ENCODE measurements at regions of chr2 and their contacts with region 1.

Region 1: DNA sequence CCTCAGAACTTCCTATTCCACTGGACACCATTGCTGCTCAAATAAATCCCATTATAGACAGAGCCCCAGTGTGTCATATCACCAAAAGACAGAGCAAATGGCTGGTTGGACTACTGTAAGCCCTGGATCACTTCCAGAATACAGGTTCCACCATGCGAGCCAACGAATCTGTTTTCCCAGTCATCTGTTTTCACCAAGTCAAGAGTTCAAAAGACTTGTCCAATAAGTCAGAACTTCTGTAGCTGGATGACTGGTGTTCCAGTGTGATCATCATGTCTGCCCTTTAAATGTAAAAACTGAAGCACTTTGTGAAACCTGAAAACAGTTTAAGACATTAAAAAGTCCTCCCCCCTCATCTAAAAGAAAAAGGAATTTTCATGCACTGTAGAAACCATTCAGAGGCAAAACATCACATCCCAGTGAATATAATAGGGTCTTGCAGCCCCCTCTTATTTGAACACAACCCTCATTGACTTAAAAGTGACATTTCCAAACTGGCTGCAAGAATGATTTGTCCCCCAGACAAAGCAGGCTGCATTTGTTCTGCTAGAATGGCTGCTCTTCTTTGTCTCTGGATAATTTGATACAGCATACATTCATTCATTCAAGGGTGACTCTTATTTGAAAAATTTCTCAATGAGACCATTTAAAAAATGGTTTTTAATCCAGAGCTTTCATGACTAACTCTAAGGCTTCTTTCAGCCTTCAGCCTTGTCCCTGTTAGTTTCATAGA is 64.6 kb upstream of the TANC1 start:
- DNase-seq: no peak
- H3K4me3 Mint-ChIP-seq: no peak overlapping the region
- H3K27ac Mint-ChIP-seq: no peak overlapping the region
- H3K4me1 Mint-ChIP-seq: no peaks in the 10 kb centered on the region
- H3K27me3 Mint-ChIP-seq: no peaks in the 10 kb centered on the region
- CTCF ChIP-seq: no peak

Region 2: GRCh38 chr2:158893026-158893425 is 10.9 kb before region 1 on chr2:
- CTCF ChIA-PET with region 1: interaction called, 14 read pairs
- POLR2A ChIA-PET with region 1: interaction called, 4 read pairs
- intact Hi-C with region 1: no loop called
- DNase-seq: peak; percentile 91
- H3K4me3 Mint-ChIP-seq: peak overlapping the region; percentile 49
- H3K27ac Mint-ChIP-seq: peak overlapping the region; percentile 97
- H3K4me1 Mint-ChIP-seq: peaks cover 46% of the 10 kb centered on the region
- H3K27me3 Mint-ChIP-seq: no peaks in the 10 kb centered on the region
- CTCF ChIP-seq: no peak

Region 3: GRCh38 chr2:158990397-158991209 is 86.7 kb after region 1 on chr2:
- CTCF ChIA-PET with region 1: no interaction called
- POLR2A ChIA-PET with region 1: no interaction called
- intact Hi-C with region 1: loop called (anchors 1 kb)
- DNase-seq: peak; percentile 98
- H3K4me3 Mint-ChIP-seq: peak overlapping the region; percentile 52
- H3K27ac Mint-ChIP-seq: peak overlapping the region; percentile 73
- H3K4me1 Mint-ChIP-seq: peaks cover 48% of the 10 kb centered on the region
- H3K27me3 Mint-ChIP-seq: no peaks in the 10 kb centered on the region
- CTCF ChIP-seq: no peak

Region 4: DNA sequence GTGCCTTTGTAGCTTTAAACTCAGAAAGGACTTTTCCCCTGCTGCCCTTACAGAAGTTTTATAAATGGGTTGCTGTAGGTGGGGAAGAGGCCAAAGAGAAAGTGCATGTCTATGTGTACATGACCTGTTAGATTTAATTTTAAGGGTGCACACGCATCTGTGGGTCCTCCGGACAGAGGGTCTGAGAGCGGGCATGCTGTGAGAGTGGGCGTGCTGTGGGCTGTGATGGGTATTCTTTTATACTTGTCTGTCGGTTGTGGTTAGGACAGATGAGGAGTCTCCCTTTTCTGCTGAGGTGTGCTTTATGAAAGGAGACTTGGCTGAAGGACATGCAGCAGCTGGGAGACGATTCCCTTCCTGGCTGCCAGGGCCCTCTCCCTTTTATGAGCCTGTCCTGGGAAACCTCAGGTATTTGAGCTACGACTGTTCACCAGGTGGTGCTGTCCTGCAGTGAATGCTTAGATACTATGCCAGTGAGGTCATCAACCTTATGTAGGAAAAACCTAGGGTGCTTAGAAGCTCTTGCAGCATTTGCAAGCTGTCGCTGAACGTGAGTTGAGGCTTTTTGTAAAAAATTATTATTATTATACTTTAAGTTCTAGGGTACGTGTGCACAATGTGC is 132.0 kb after region 1 on chr2:
- CTCF ChIA-PET with region 1: interaction called, 9 read pairs
- POLR2A ChIA-PET with region 1: no interaction called
- intact Hi-C with region 1: loop called (anchors 1 kb)
- DNase-seq: peak; percentile 73
- H3K4me3 Mint-ChIP-seq: no peak overlapping the region
- H3K27ac Mint-ChIP-seq: no peak overlapping the region
- H3K4me1 Mint-ChIP-seq: peaks cover 33% of the 10 kb centered on the region
- H3K27me3 Mint-ChIP-seq: no peaks in the 10 kb centered on the region
- CTCF ChIP-seq: peak; percentile 53

Region 5: DNA sequence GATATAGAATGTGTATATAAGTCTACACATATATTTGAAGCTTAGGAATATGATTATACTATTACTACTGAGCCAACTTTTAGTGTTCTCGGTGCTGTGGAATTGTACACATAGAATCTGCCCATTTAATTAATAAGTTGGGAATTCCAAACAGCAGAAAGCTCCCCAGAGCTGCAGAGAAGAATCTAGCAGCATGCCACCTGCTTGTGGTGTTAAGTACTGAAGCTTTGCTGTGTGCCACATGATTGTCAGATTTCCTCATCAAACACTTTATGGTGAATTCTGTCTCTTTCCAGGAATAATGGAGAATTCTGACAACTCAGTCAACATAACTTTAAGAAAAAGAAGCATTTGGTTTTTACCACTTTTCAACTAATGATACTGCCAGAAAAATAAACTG is 264.8 kb after region 1 on chr2:
- CTCF ChIA-PET with region 1: interaction called, 3 read pairs
- POLR2A ChIA-PET with region 1: no interaction called
- intact Hi-C with region 1: loop called (anchors 1 kb)
- DNase-seq: peak; percentile 58
- H3K4me3 Mint-ChIP-seq: no peak overlapping the region
- H3K27ac Mint-ChIP-seq: no peak overlapping the region
- H3K4me1 Mint-ChIP-seq: peaks cover 8% of the 10 kb centered on the region
- H3K27me3 Mint-ChIP-seq: no peaks in the 10 kb centered on the region
- CTCF ChIP-seq: peak; percentile 16

Region 6: GRCh38 chr2:159185401-159186130 is 281.7 kb after region 1 on chr2:
- CTCF ChIA-PET with region 1: interaction called, 5 read pairs
- POLR2A ChIA-PET with region 1: no interaction called
- intact Hi-C with region 1: loop called (anchors 1 kb)
- DNase-seq: peak; percentile 37
- H3K4me3 Mint-ChIP-seq: no peak overlapping the region
- H3K27ac Mint-ChIP-seq: peak overlapping the region; percentile 25
- H3K4me1 Mint-ChIP-seq: no peaks in the 10 kb centered on the region
- H3K27me3 Mint-ChIP-seq: no peaks in the 10 kb centered on the region
- CTCF ChIP-seq: peak; percentile 20